Sciatic nerve (tissue), 2 donors: ENCODE measurements at regions of chr19 and their contacts with region 1.

Region 1: DNA sequence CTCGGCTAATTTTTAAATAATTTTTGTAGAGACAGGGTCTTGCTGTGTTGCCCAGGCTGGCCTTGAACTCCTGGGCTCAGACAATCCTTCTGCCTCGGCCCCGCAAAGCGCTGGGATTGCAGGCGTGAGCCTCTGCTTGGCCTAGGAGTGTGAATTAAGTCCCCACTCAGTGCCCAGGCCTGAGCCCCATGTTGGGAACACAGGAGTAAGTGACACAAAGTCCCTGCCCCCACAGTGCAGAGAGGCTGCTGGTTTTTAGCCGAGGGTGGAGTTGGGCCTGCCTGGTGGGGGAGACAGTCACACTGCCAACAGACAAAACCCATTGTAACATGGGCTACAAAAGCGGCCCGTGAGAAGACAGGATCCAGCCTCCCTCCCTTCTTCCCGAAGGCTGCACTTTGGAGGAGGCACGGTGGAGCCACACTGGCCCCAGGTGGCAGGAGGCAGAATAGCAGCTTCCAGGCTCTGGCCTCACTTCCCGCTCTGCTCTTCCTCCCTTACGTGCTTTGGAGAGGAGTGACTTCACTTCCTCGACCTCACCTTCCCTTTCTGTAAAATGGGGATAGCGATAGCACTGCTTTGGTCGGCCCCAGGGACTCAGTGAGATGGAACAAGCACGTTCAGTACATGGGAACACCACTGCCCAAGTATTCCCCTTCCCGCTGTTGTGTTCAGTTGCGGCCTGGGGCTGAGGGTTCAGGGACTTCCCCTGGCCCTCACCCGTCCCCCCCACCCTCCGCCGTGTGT is 15.2 kb upstream of the EHD2 start:
- DNase-seq: peak; percentile 85
- ATAC-seq: peak; percentile 88

Region 2: GRCh38 chr19:47436712-47437401 is 261.2 kb before region 1 on chr19:
- intact Hi-C with region 1: loop called (anchors 5 kb)
- DNase-seq: peak; percentile 88
- ATAC-seq: peak; percentile 89

Region 3: DNA sequence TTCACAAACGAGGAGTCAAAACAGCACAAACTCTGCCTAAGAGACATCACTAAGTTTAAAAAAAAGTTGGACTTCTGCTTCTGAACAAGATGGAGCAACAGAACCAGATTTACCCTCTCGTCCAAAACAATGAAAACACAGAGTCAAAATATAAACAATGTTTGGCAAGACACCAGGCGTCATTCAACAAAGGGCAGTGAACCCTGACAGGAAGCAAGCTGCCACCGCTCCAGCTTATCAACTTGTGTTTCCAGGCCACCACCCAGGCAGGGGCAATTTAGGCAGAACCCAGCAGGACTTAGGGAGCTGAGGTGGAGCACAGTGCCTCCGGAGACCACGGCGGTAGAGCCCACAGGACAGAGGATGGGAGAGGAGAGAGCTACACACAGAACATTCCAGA is 174.6 kb before region 1 on chr19:
- intact Hi-C with region 1: loop called (anchors 10 kb)
- DNase-seq: no peak
- ATAC-seq: no peak